CD8-positive, alpha-beta T cell (primary cell): ENCODE measurements at regions of chr20 and their contacts with region 1.

Region 1: DNA sequence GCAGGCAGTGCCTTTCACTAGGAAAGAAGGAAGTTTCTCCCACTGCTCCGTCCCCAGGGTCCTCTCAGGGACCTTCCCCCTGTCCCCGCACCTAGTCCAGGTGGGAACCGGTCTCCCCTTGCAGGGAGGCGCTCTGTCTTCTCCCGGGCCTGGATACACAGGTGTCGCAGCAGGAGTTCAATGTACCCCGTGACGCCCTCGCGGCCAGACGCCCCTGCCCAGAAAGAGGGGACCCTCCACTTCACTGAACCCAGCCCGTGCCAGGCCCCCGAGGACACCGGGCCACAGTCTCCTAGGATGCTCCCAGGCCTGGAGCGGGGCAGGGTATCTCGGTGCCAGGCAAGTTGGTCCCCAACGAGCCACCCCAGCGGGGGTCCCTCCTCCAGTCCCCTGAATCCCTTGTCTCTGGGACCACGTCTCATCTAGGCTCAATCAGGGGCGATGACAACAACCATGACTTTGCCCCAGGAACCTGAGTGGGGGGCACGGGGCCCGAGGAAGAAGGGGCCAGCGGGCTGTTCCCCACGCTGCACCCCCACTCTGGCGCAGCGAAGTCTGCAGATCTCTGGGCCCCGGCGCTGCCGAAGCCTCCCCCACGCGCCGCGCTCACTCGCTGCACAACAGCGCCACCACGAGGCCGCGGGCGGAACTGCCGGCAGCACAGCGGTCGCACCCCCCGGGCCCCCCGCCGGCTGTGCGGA is 103.0 kb downstream of the EDN3 start:
- DNase-seq: peak; percentile 57 to 91 (median 73)
- ATAC-seq: peak; percentile 84
- H3K4me3 ChIP-seq: peak overlapping the region; percentile 10 to 47
- H3K4me3 Mint-ChIP-seq: no peak overlapping the region
- H3K27ac ChIP-seq: peak overlapping the region in 1 of 2 experiments; percentile 21
- H3K27ac Mint-ChIP-seq: peak overlapping the region; percentile 81
- H3K4me1 ChIP-seq: peaks cover 38% of the 10 kb centered on the region
- H3K4me1 Mint-ChIP-seq: peaks cover 4% of the 10 kb centered on the region
- H3K27me3 ChIP-seq: peaks cover 7 to 13% of the 10 kb centered on the region in 2 experiments
- H3K27me3 Mint-ChIP-seq: peaks cover 8% of the 10 kb centered on the region
- CTCF ChIP-seq: peak; percentile 99

Region 2: DNA sequence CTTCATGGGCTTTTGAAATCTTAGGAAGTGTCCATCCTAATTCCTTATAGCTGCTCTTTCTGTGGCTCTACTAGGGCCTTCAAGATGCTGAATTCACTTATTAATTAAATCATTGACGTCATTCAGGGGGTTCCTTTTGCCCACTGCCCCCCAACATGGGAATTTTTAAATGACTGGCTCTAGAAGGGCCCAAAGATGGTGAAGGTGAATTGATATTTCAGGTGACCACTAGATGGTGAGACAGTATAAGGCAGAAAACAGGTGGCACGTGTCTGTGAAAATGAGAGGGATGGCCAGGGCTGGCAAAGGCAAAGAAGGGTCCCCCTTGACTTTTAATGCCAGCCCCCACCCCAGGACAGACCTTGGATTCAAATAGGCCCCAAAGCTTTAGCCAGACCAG is 539.1 kb before region 1 on chr20:
- CTCF ChIA-PET with region 1: interaction called, 25 read pairs
- POLR2A ChIA-PET with region 1: no interaction called
- intact Hi-C with region 1: loop called (anchors 1 kb)
- DNase-seq: peak in 2 of 9 experiments; percentile 43 to 58
- ATAC-seq: peak; percentile 49
- H3K4me3 ChIP-seq: no peak overlapping the region
- H3K4me3 Mint-ChIP-seq: no peak overlapping the region
- H3K27ac ChIP-seq: no peak overlapping the region
- H3K27ac Mint-ChIP-seq: no peak overlapping the region
- H3K4me1 ChIP-seq: no peaks in the 10 kb centered on the region
- H3K4me1 Mint-ChIP-seq: no peaks in the 10 kb centered on the region
- H3K27me3 ChIP-seq: no peaks in the 10 kb centered on the region
- H3K27me3 Mint-ChIP-seq: peaks cover 18% of the 10 kb centered on the region
- CTCF ChIP-seq: peak; percentile 53

Region 3: GRCh38 chr20:59055295-59055694 is 348.1 kb before region 1 on chr20:
- CTCF ChIA-PET with region 1: interaction called, 7 read pairs
- POLR2A ChIA-PET with region 1: no interaction called
- intact Hi-C with region 1: loop called in 1 of 2 experiments (anchors 1 kb)
- DNase-seq: peak in 3 of 9 experiments; percentile 16 to 60 (median 49)
- ATAC-seq: no peak
- H3K4me3 ChIP-seq: no peak overlapping the region
- H3K4me3 Mint-ChIP-seq: no peak overlapping the region
- H3K27ac ChIP-seq: no peak overlapping the region
- H3K27ac Mint-ChIP-seq: no peak overlapping the region
- H3K4me1 ChIP-seq: no peaks in the 10 kb centered on the region
- H3K4me1 Mint-ChIP-seq: no peaks in the 10 kb centered on the region
- H3K27me3 ChIP-seq: peaks cover 0 to 4% of the 10 kb centered on the region in 2 experiments
- H3K27me3 Mint-ChIP-seq: peaks cover 33% of the 10 kb centered on the region
- CTCF ChIP-seq: peak; percentile 24

Region 4: GRCh38 chr20:59165891-59166709 is 237.3 kb before region 1 on chr20:
- CTCF ChIA-PET with region 1: no interaction called
- POLR2A ChIA-PET with region 1: no interaction called
- intact Hi-C with region 1: loop called in 1 of 2 experiments (anchors 5 kb)
- DNase-seq: peak in 4 of 9 experiments; percentile 20 to 79 (median 60)
- ATAC-seq: peak; percentile 64
- H3K4me3 ChIP-seq: peak overlapping the region; percentile 59 to 62
- H3K4me3 Mint-ChIP-seq: peak overlapping the region; percentile 84
- H3K27ac ChIP-seq: peak overlapping the region; percentile 93 to 95
- H3K27ac Mint-ChIP-seq: peak overlapping the region; percentile 93
- H3K4me1 ChIP-seq: peaks cover 85% of the 10 kb centered on the region
- H3K4me1 Mint-ChIP-seq: peaks cover 93% of the 10 kb centered on the region
- H3K27me3 ChIP-seq: no peaks in the 10 kb centered on the region
- H3K27me3 Mint-ChIP-seq: no peaks in the 10 kb centered on the region
- CTCF ChIP-seq: no peak

Region 5: DNA sequence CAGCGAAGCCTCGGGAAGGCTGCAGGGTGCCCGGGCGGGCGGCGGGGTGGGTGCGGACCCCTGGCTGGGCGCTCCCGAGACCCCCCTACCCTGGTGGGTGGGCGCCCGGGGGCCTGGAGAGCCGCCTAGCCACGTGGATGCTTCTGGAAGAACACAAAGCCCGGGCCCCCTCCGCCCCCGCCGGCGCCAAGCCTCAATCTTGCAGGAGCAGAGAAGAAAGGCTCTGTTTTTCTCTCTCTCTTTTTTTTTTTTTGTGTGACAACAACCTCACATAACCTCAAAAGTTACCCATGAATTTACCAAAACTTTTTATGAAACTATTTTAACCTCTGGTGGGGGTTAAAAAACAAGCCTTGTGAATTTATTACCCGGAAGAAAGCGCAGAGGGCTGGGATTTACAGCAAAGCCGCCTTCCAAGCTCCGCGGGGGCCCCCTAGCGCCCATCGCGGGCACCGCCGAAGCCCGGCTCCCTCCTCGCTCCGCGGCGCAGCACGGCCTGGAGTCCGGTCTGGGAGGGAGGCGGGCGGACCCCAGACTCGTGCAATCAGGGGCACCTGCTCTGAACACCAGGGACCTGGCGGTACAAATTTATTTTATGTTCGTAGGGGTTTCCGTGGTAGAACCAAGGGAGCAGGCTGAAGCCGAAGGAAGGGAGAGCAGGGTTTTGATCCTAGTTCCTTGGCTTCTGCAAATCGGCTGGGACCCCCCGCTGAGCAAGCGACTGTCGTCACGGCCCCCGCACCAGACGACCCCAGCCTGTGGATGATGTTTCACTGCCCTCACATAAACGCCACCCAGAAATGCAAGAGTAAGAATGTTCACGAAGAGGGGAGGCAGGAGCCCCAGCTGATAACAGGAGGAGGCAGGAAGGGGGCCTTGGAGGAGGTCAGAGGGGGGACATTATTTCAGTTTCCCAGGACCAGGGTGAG is 180.9 kb before region 1 on chr20:
- CTCF ChIA-PET with region 1: interaction called, 27 read pairs
- POLR2A ChIA-PET with region 1: no interaction called
- intact Hi-C with region 1: loop called (anchors 1 kb)
- DNase-seq: peak; percentile 64 to 89 (median 82)
- ATAC-seq: peak; percentile 94
- H3K4me3 ChIP-seq: peak overlapping the region; percentile 39 to 50
- H3K4me3 Mint-ChIP-seq: peak overlapping the region; percentile 78
- H3K27ac ChIP-seq: peak overlapping the region in 1 of 2 experiments; percentile 31
- H3K27ac Mint-ChIP-seq: peak overlapping the region; percentile 88
- H3K4me1 ChIP-seq: peaks cover 18% of the 10 kb centered on the region
- H3K4me1 Mint-ChIP-seq: peaks cover 34% of the 10 kb centered on the region
- H3K27me3 ChIP-seq: no peaks in the 10 kb centered on the region
- H3K27me3 Mint-ChIP-seq: no peaks in the 10 kb centered on the region
- CTCF ChIP-seq: peak; percentile 96

Region 6: GRCh38 chr20:59386809-59387208 is 16.6 kb before region 1 on chr20:
- CTCF ChIA-PET with region 1: interaction called, 10 read pairs
- POLR2A ChIA-PET with region 1: interaction called, 3 read pairs
- intact Hi-C with region 1: no loop called
- DNase-seq: no peak
- ATAC-seq: no peak
- H3K4me3 ChIP-seq: no peak overlapping the region
- H3K4me3 Mint-ChIP-seq: no peak overlapping the region
- H3K27ac ChIP-seq: no peak overlapping the region
- H3K27ac Mint-ChIP-seq: no peak overlapping the region
- H3K4me1 ChIP-seq: peaks cover 11% of the 10 kb centered on the region
- H3K4me1 Mint-ChIP-seq: peaks cover 10% of the 10 kb centered on the region
- H3K27me3 ChIP-seq: no peaks in the 10 kb centered on the region
- H3K27me3 Mint-ChIP-seq: no peaks in the 10 kb centered on the region
- CTCF ChIP-seq: no peak